ENCODE measurements at regions of chr17 and their contacts with region 1.

Region 1: GRCh38 chr17:32127158-32127897 is 15.0 kb upstream of the RHOT1 start:
- DNase-seq: peak; percentile 67 to 84 (median 76)
- ATAC-seq: peak; percentile 99 to 100
- H3K4me3 Mint-ChIP-seq: peak overlapping the region; percentile 91 to 99 (median 97)
- H3K27ac Mint-ChIP-seq: peak overlapping the region; percentile 96 to 100 (median 98)
- H3K4me1 Mint-ChIP-seq: peaks cover 12 to 32% (median 25%) of the 10 kb centered on the region in 4 donors
- H3K27me3 Mint-ChIP-seq: no peaks in the 10 kb centered on the region

Region 2: DNA sequence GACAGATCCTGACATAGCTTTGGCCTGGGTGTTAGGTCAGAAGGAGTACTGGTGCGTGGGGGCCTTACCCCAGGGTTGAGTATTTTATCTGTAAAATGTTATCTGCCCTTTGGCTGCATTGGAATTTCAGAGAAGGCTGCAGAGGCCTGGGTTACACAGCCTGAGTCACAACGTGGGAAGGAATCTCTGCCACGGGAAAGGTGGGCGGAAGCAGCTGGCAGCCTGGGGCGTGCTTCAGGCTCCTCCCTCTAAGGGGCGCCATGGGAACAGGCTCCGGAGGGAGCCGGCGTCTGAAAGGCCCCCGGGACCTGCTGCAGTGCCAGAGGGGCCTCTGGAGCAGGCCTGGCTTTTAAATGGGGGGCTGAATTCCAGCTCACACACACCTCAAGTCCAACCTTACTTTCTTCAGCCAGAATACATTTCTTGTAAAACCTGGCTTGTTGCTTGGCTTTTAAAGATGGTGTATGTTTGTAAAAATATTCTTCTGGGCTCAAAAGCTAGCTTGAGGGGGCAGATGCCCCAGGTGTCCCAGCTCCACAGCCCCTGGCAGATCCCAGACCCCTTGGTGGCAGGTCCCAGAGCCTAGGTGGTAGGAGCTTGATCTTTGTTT is 593.7 kb before region 1 on chr17:
- POLR2A ChIA-PET with region 1: no interaction called
- DNase-seq: no peak
- ATAC-seq: no peak
- H3K4me3 Mint-ChIP-seq: no peak overlapping the region
- H3K27ac Mint-ChIP-seq: peak overlapping the region in 4 of 10 donors; percentile 1 to 83 (median 71)
- H3K4me1 Mint-ChIP-seq: peaks cover 13 to 46% (median 26%) of the 10 kb centered on the region in 4 donors
- H3K27me3 Mint-ChIP-seq: no peaks in the 10 kb centered on the region

Region 3: DNA sequence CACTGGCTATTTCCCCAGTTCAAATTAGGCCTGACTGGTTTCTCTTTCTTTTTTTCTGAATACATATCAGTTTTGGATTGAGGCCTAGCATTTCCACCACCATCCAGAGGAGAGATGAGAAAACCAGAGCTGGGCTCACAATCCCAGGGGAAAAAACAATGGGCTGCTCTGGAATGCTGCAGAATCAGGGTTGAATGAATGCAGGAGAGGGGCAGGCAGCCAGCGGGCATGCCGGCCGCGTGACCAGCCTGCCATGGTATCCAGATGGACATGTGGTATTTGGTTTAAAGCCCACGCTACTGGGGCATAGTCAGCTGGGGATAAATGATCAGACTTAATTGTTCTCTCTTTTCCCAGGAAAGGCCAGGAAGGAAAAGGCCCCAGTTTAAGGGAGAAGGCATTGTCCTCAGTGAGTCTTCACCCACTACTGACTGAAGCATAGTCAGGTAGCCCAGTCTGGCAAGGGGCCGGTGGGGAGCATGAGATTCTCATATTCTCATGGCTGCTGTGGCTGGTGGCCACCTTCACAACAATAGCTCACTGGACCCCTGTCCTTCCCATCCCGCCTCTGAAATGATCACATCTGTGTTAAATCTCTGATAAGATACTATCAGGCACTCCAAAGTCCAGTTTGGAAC is 23.7 kb before region 1 on chr17:
- POLR2A ChIA-PET with region 1: interaction called, 21 read pairs
- DNase-seq: peak in 1 of 10 donors; percentile 0
- ATAC-seq: no peak
- H3K4me3 Mint-ChIP-seq: peak overlapping the region in 9 of 10 donors; percentile 54 to 83 (median 79)
- H3K27ac Mint-ChIP-seq: peak overlapping the region; percentile 84 to 100 (median 96)
- H3K4me1 Mint-ChIP-seq: peaks cover 19 to 44% (median 39%) of the 10 kb centered on the region in 4 donors
- H3K27me3 Mint-ChIP-seq: no peaks in the 10 kb centered on the region

Measured in naive thymus-derived CD8-positive, alpha-beta T cell (primary cell).